Heart right ventricle (tissue), 16 donors: ENCODE measurements at regions of chr11 and their contacts with region 1.

Region 1: DNA sequence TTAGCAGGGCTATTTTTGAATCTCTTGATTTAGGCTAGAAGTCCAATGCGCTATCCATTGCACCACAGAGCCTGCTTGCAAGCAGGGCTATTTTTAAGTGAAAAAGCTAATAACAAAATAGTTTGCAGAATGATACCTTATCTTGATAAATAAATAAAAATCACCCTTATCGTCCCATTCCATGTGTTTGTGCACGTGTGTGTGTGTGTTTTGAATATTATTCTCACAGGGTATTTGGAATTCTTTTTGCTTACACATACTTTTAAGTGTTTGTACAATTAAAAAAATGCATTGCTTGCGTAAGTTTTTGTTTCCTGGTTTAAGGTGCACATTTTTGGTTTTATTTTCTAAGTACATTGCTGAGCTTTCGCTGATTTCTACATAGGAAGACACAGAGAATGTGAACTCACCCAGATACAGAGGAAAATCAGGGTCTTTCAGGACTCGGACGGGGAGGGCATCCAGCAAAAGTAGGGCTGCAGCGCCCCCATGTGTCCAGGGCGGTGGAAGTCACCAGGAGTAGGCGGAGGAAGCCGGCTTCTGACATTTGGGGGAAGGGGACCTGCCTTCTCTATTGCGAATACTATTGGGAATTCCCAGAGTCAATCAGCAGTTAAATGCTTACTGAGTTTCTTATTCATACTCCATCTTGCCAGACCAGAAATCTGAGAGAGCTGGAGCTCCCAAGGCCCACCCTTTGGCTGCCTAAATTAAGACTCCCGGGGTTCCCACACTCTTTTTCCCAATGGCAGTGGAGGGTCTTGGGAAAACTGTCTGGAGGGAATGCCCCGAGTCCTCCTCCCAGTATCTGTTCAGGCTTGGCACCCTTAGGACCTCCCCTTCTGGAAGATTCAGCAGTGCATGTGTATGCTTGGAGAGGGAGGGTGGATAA is 27.2 kb downstream of the SLC1A2 start:
- DNase-seq: peak; percentile 84 to 89
- ATAC-seq: peak; percentile 91 to 96 (median 93)
- H3K4me3 ChIP-seq: peak overlapping the region in 1 of 10 donors; percentile 7
- H3K27ac ChIP-seq: no peak overlapping the region
- H3K4me1 ChIP-seq: peaks cover 0 to 30% (median 6%) of the 10 kb centered on the region in 9 donors
- H3K27me3 ChIP-seq: peaks cover 0 to 6% (median 0%) of the 10 kb centered on the region in 7 donors
- CTCF ChIP-seq: peak; percentile 75 to 96 (median 91)

Region 2: DNA sequence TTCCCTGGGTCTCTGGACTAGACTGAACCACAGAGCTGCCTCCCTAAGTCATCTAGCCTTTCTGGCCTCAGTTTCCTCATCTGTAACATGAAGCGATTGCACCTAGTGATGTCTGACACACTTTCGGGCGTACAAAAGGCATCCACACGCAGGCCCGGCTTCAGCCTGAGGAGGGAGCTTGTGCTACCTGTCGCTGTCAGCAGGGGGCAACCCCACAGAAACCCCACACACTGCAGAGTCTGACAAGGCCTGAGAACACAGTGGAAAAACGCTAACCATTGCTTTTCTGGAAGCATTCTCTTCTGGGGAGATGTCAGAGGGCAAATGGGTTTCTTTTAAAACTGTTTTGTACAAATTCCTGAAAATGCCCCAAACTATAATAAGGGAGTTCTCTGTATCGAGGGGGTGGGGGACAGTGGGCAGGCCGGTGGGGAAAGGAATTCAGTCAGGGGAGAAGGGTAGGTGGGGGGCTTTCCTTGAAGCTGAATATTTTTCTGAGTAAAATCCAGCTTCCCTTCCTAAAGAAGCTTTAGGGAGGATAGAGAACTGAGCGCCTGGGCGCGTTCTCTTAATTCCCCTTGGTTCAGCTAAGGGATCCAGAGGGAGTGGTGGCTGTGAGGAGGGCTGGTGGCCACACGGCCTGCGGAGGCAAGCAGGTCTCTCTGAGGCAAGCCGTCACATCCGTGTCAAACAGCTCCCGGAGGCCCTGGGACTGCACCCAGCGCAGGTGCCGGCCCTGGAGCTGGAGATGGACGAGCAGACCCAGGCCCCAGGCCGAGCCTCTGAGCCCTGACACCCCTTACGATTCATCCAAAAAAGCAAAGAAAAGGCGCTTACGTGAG is 879.1 kb before region 1 on chr11:
- intact Hi-C with region 1: loop called in 2 of 10 experiments (anchors 5 to 10 kb)
- DNase-seq: peak; percentile 21 to 31
- ATAC-seq: peak in 6 of 8 donors; percentile 62 to 85 (median 69)
- H3K4me3 ChIP-seq: no peak overlapping the region
- H3K27ac ChIP-seq: no peak overlapping the region
- H3K4me1 ChIP-seq: peaks cover 0 to 12% (median 0%) of the 10 kb centered on the region in 9 donors
- H3K27me3 ChIP-seq: peaks cover 0 to 5% (median 0%) of the 10 kb centered on the region in 7 donors
- CTCF ChIP-seq: peak; percentile 5 to 74 (median 58)

Region 3: DNA sequence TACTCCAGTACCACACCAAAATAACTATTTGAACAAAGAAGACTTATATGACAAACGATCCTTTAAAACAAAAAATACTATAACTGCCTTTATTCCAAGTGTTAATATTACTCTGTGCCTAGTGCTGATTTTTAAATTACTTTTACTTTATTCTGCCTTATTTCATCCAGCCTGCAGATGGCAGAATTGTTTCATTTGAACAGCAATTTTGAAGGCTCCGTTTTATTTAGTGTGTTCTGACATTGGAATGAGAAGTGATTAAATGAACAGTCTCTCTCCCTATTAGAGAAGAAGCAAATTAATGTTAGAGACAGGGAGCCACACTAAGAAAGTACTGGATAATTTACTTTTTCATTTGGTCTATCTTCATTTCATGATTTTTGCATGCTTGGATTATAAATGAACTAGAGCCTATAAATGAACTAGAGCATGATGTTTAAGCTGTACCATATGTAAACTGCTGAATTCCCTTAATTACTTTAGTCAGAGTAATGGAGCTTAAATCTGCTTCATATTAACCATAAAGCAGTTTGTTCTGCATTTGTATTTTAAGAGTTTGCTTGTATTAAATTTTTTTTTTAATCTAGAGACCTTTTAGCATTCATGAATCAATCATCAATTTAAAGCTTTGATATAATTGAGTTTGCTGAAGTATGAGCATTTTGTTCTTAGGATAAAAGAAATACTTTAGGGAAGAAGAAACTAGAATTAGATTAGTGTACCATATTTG is 465.9 kb before region 1 on chr11:
- intact Hi-C with region 1: loop called (anchors 1 to 5 kb)
- DNase-seq: no peak
- ATAC-seq: peak in 7 of 8 donors; percentile 29 to 82 (median 64)
- H3K4me3 ChIP-seq: no peak overlapping the region
- H3K27ac ChIP-seq: peak overlapping the region in 1 of 10 donors; percentile 68
- H3K4me1 ChIP-seq: peaks cover 0 to 77% (median 38%) of the 10 kb centered on the region in 9 donors
- H3K27me3 ChIP-seq: no peaks in the 10 kb centered on the region
- CTCF ChIP-seq: peak; percentile 34 to 83 (median 72)

Region 4: DNA sequence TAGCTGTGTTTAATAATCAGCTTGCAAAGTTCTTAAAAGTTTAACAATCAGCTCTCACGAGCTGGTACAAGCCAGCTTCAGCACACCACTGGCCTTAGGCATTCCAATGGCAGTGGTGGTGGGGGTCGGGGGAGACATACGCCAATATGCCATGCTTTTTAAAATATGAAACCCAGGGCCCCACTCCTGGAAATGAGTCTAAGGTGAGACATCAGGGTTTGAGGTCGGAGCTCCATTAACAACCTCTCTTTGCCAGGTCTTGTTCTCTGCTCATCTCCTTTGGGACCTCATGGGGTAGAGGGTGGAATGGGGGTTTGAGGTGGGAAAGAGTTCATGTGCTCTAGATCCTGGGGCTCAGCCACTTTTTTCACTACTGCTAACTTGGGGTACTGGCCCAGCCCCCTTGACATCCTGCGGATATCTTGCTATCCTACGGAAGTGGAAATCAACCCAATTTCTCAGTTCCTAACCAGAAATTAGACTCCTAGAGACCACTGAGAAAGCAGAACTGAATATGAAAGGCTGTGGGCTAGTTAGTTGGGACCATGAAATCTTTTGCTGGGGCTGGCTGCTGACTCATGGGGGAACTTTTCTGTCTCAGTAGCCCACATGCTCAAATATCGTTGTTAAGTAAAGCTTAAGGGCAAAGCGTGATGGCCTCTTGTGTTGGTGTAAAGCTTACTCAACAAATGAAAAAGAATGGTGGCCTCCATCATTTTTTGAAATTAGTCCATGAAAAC is 385.6 kb before region 1 on chr11:
- intact Hi-C with region 1: loop called in 2 of 10 experiments (anchors 5 to 10 kb)
- DNase-seq: no peak
- ATAC-seq: peak in 1 of 8 donors; percentile 38
- H3K4me3 ChIP-seq: no peak overlapping the region
- H3K27ac ChIP-seq: no peak overlapping the region
- H3K4me1 ChIP-seq: peaks cover 0 to 20% (median 0%) of the 10 kb centered on the region in 9 donors
- H3K27me3 ChIP-seq: no peaks in the 10 kb centered on the region
- CTCF ChIP-seq: no peak

Region 5: GRCh38 chr11:35246745-35247144 is 145.4 kb before region 1 on chr11:
- intact Hi-C with region 1: loop called in 1 of 10 experiments (anchors 10 kb)
- DNase-seq: peak in 1 of 2 donors; percentile 60
- ATAC-seq: peak; percentile 55 to 96 (median 92)
- H3K4me3 ChIP-seq: no peak overlapping the region
- H3K27ac ChIP-seq: peak overlapping the region; percentile 8 to 88 (median 72)
- H3K4me1 ChIP-seq: peaks cover 0 to 34% (median 10%) of the 10 kb centered on the region in 9 donors
- H3K27me3 ChIP-seq: no peaks in the 10 kb centered on the region
- CTCF ChIP-seq: no peak

Region 6: DNA sequence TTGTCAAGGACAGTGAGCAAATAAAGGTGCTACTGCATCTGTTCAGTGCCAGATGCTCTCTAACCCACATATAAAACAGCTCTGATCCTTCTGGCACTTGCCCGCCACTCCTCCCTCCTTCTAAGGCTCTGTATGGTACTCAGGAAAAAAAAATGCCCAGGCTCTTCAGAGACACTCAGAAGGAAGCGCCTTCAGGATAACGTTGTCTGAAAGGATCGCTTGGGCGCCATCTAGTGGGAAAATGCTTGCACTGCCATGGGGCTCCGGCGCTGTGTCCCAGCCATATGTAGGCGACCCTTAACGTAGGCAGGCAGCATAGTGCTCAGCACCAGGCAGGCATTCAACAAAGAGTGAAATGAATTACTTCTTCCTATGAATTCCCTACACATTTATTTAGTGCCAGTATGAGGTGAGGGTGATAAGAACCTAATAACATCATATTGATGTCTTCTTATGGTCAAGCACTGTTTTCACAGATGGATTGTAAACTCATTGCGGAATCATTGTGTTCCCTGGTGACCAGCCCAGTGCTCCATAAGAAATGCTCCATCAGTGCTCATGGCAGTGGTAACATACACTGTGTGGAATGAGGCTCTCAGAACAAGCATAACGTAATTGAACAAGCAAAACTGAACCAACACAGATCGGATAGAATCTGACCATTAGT is 93.6 kb after region 1 on chr11:
- intact Hi-C with region 1: loop called in 1 of 10 experiments (anchors 10 kb)
- DNase-seq: peak; percentile 65 to 68
- ATAC-seq: peak; percentile 75 to 90 (median 88)
- H3K4me3 ChIP-seq: no peak overlapping the region
- H3K27ac ChIP-seq: no peak overlapping the region
- H3K4me1 ChIP-seq: peaks cover 0 to 12% (median 0%) of the 10 kb centered on the region in 9 donors
- H3K27me3 ChIP-seq: peaks cover 0 to 15% (median 8%) of the 10 kb centered on the region in 7 donors
- CTCF ChIP-seq: peak; percentile 76 to 94 (median 90)